ENCODE measurements at regions of chr6 and their contacts with region 1.

Region 1: GRCh38 chr6:30828027-30828960 is 56.0 kb upstream of the DDR1 start:
- DNase-seq: peak; percentile 80
- H3K4me3 ChIP-seq: no peak overlapping the region
- H3K27ac ChIP-seq: peak overlapping the region in 1 of 2 experiments; percentile 38; a peak in 1 of 4 replicates
- H3K4me1 ChIP-seq: peaks cover 7 to 12% of the 10 kb centered on the region in 2 experiments; a peak in 3 of 4 replicates
- H3K27me3 ChIP-seq: no peaks in the 10 kb centered on the region
- CTCF ChIP-seq: peak; percentile 97
- EP300 ChIP-seq: no peak
- RAD21 ChIP-seq: peak; percentile 97

Region 2: GRCh38 chr6:30013291-30013922 is 814.9 kb before region 1 on chr6:
- CTCF ChIA-PET with region 1: no interaction called
- POLR2A ChIA-PET with region 1: no interaction called
- DNase-seq: peak; percentile 64
- H3K4me3 ChIP-seq: no peak overlapping the region
- H3K27ac ChIP-seq: no peak overlapping the region
- H3K4me1 ChIP-seq: no peaks in the 10 kb centered on the region
- H3K27me3 ChIP-seq: no peaks in the 10 kb centered on the region
- CTCF ChIP-seq: peak; percentile 66
- EP300 ChIP-seq: no peak
- RAD21 ChIP-seq: peak; percentile 83

Region 3: GRCh38 chr6:30656513-30656912 is 171.8 kb before region 1 on chr6:
- CTCF ChIA-PET with region 1: no interaction called
- POLR2A ChIA-PET with region 1: no interaction called
- DNase-seq: no peak
- H3K4me3 ChIP-seq: no peak overlapping the region
- H3K27ac ChIP-seq: no peak overlapping the region
- H3K4me1 ChIP-seq: no peaks in the 10 kb centered on the region
- H3K27me3 ChIP-seq: no peaks in the 10 kb centered on the region
- CTCF ChIP-seq: no peak
- EP300 ChIP-seq: no peak
- RAD21 ChIP-seq: no peak

Region 4: DNA sequence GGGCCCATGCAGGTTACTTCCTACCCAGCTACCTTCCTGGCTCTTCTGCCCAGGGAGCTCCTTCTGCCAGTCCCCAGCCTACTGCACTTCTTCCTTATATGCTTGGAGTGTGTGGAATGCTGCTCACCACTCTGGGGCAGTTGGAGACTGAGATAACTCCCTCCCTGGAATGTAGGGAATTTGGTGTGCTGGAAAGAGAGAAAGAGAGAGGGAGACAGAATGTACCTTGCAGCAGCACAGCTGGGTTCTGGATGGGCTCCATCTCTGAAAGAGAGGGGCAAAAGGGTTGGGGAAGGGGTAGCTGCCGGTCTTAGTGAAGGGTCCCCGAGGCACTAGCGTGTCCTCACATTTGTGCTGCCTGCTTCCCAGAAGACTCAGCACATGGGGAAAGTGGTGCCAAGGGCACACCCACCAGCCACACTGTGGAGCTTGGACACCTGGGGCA is 15.8 kb after region 1 on chr6:
- CTCF ChIA-PET with region 1: interaction called, 13 read pairs
- POLR2A ChIA-PET with region 1: no interaction called
- DNase-seq: no peak
- H3K4me3 ChIP-seq: no peak overlapping the region
- H3K27ac ChIP-seq: no peak overlapping the region; a peak in 1 of 4 replicates
- H3K4me1 ChIP-seq: peaks cover 2 to 9% of the 10 kb centered on the region in 2 experiments; a peak in 2 of 4 replicates
- H3K27me3 ChIP-seq: no peaks in the 10 kb centered on the region
- CTCF ChIP-seq: no peak
- EP300 ChIP-seq: no peak
- RAD21 ChIP-seq: no peak

Region 5: DNA sequence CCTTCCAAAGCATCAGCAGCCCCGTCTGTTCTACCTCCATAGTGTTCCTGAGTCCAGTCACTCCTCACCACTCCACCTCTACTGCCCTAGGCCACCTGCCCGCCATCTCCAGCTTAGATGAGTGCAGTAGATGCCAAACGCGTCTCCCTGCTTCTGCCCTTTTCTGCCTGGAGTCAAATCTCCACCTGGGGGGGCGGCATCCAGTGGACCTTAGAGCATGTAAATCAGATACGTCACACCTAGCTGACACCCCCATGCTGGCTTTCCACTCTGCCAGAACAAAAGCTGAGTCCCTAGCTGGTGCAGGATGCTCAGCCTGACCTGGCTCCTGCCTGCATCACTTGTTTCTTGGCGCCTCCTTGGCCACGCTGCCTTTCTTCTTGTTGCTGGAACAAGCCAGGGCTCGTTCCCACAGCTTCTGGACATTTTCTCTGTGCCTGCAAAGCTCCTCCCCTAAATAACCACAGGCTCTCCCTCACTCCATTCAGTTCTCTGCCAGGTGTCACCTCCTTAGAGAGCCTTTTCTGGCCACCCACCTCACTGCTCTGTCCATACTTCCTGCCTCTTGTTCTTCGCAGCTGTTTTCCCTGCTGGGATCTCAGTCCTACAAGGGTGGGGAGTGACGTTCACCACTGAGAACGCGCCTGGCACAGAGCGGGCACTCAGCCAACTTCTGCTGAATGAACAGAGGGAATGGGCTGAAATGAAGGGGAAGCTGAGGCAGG is 61.8 kb after region 1 on chr6:
- CTCF ChIA-PET with region 1: interaction called, 11 read pairs
- POLR2A ChIA-PET with region 1: no interaction called
- DNase-seq: peak; percentile 32
- H3K4me3 ChIP-seq: no peak overlapping the region
- H3K27ac ChIP-seq: no peak overlapping the region; a peak in 1 of 4 replicates
- H3K4me1 ChIP-seq: peaks cover 20 to 26% of the 10 kb centered on the region in 2 experiments; a peak in 3 of 4 replicates
- H3K27me3 ChIP-seq: no peaks in the 10 kb centered on the region
- CTCF ChIP-seq: no peak
- EP300 ChIP-seq: no peak
- RAD21 ChIP-seq: no peak

Region 6: GRCh38 chr6:30960907-30961673 is 132.8 kb after region 1 on chr6:
- CTCF ChIA-PET with region 1: no interaction called
- POLR2A ChIA-PET with region 1: no interaction called
- DNase-seq: no peak
- H3K4me3 ChIP-seq: no peak overlapping the region
- H3K27ac ChIP-seq: no peak overlapping the region
- H3K4me1 ChIP-seq: no peaks in the 10 kb centered on the region; a peak in 1 of 4 replicates
- H3K27me3 ChIP-seq: peaks cover 6% of the 10 kb centered on the region; the same call in 1 of the 2 replicates
- CTCF ChIP-seq: no peak
- EP300 ChIP-seq: no peak
- RAD21 ChIP-seq: no peak

Region 7: DNA sequence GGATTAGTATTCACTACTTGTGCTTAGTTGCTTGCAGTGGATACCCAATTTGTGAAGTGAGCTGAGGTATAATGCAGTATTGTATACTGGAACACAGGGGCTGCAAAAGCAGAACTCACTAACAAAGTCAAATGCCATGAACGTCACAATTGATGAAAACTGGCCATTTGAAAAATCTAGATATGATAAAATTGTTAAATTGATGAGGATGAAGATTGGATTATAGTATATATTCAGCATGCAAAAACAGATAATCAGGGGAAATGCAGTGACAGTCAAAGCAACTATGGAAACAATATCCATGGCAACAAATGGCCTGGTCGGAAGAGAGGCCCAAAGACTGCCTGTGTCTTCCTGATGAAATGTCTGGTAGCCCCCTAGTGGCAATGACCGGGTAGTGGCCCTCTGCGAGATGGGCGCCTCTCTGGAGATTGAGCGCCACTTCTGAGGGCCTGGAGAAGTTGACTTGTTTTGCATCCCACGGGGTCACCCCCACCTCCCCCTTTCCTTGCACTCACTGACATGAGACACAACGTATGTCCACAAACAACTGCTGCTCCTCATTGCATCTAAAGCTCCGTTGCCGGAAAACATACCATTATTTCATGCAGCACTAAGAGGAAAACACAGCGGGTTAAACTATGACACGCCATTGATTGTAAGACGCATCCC is 240.5 kb after region 1 on chr6:
- CTCF ChIA-PET with region 1: interaction called, 18 read pairs
- POLR2A ChIA-PET with region 1: no interaction called
- DNase-seq: peak; percentile 86
- H3K4me3 ChIP-seq: no peak overlapping the region; a peak in 1 of 4 replicates
- H3K27ac ChIP-seq: no peak overlapping the region
- H3K4me1 ChIP-seq: peaks cover 6 to 13% of the 10 kb centered on the region in 2 experiments; a peak in 3 of 4 replicates
- H3K27me3 ChIP-seq: no peaks in the 10 kb centered on the region
- CTCF ChIP-seq: peak; percentile 90
- EP300 ChIP-seq: no peak
- RAD21 ChIP-seq: peak; percentile 65